ENCODE measurements at regions of chr3 and their contacts with region 1.

Region 1: GRCh38 chr3:16264708-16265454 is at the starts of genes DPH3 and OXNAD1:
- DNase-seq: peak; percentile 100
- ATAC-seq: peak; percentile 96
- H3K4me3 Mint-ChIP-seq: peak within 1 kb of the TSS; percentile 84
- H3K27ac Mint-ChIP-seq: peak within 1 kb of the TSS; percentile 97
- H3K4me1 Mint-ChIP-seq: peaks cover 37% of the 10 kb centered on the region
- H3K27me3 Mint-ChIP-seq: no peaks in the 10 kb centered on the region
- total RNA-seq, gene DPH3: 13.9 to 23.8 TPM
- total RNA-seq, gene OXNAD1: 44.9 to 47.4 TPM

Region 2: GRCh38 chr3:16247276-16248061 is 17.4 kb before region 1 on chr3:
- CTCF ChIA-PET with region 1: interaction called, 16 read pairs
- DNase-seq: peak; percentile 87
- ATAC-seq: peak; percentile 94
- H3K4me3 Mint-ChIP-seq: no peak overlapping the region
- H3K27ac Mint-ChIP-seq: no peak overlapping the region
- H3K4me1 Mint-ChIP-seq: peaks cover 25% of the 10 kb centered on the region
- H3K27me3 Mint-ChIP-seq: no peaks in the 10 kb centered on the region

Region 3: DNA sequence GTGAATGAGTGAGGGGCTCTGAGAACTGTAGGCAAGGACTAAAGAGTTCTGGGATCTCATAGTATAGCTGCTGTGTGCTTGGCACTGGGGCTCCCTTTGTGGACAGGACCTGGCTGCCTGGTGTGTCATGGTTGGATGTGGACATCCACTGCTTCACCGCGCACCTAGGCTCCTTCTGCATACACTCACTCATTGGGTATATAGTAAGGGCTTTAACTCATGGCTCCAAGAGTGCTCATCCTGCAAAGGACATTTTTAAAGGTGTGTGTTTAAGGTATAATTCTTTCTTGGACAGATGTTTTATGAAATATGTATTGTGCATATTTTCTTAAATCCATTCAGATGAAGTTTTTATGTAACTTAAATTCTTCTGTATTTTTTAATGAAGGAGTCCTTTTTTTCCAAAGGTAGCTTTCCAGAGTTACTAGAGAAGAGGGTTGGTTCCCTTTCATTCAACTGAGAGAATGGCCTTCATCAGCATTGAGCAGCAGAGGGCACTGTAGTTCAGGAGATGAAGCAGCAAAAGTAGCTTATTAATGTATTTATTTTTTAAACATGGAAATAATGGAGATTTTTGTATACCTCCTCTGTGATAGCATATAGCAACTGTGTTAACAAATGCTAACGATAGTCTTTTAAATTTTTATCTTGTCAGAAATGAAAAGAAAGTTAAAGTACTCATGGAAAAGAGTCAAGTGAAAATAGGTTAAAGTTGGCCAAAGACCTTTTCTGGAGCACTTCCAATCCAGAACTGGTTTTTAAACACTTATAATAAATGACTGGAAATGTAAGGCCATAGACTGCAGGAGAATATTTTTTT is 25.3 kb after region 1 on chr3:
- CTCF ChIA-PET with region 1: interaction called, 33 read pairs
- DNase-seq: peak; percentile 74
- ATAC-seq: peak; percentile 9
- H3K4me3 Mint-ChIP-seq: peak overlapping the region; percentile 90
- H3K27ac Mint-ChIP-seq: peak overlapping the region; percentile 96
- H3K4me1 Mint-ChIP-seq: peaks cover 70% of the 10 kb centered on the region
- H3K27me3 Mint-ChIP-seq: no peaks in the 10 kb centered on the region

Region 4: DNA sequence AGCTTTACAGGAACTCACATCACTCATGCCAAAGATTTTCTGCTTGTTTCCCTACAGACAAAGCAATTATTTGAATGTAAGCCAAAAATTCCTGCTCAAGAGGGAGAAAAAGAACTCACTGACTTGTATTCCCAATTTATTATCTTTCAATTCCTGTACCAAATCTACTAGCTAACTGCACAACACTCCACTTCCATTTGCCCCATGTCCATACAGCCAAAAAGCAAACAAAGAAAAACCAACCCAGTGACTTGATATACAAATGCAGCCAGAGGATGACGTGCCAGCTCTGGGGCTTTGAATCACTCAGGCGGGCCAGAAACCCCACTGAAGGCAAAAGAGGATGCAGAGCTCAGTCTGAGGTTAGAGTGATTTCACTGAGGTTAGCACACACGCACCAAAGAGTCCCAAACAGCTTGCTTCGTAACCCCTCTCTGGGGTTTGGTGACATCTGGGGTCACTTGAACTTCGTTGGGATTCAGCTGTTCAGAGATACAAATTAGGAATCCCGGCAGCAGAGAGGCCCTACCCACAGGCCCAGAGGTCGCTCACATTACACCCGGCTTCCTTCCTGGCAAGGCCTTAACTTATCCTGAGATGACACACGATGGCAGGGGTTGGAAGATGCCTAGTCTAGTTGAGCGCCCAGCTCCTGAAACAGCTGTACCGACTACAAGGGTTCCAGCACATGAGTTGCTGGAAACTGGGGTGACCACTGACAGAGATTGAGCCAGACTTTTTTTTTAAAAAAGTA is 247.0 kb after region 1 on chr3:
- CTCF ChIA-PET with region 1: interaction called, 11 read pairs
- DNase-seq: peak; percentile 94
- ATAC-seq: peak; percentile 66
- H3K4me3 Mint-ChIP-seq: peak overlapping the region; percentile 100
- H3K27ac Mint-ChIP-seq: peak overlapping the region; percentile 86
- H3K4me1 Mint-ChIP-seq: peaks cover 79% of the 10 kb centered on the region
- H3K27me3 Mint-ChIP-seq: no peaks in the 10 kb centered on the region

Region 5: GRCh38 chr3:16600780-16601539 is 336.1 kb after region 1 on chr3:
- CTCF ChIA-PET with region 1: interaction called, 10 read pairs
- DNase-seq: peak; percentile 84
- ATAC-seq: peak; percentile 64
- H3K4me3 Mint-ChIP-seq: no peak overlapping the region
- H3K27ac Mint-ChIP-seq: no peak overlapping the region
- H3K4me1 Mint-ChIP-seq: peaks cover 25% of the 10 kb centered on the region
- H3K27me3 Mint-ChIP-seq: peaks cover 61% of the 10 kb centered on the region